ENCODE measurements at regions of chr10 and their contacts with region 1.

Region 1: DNA sequence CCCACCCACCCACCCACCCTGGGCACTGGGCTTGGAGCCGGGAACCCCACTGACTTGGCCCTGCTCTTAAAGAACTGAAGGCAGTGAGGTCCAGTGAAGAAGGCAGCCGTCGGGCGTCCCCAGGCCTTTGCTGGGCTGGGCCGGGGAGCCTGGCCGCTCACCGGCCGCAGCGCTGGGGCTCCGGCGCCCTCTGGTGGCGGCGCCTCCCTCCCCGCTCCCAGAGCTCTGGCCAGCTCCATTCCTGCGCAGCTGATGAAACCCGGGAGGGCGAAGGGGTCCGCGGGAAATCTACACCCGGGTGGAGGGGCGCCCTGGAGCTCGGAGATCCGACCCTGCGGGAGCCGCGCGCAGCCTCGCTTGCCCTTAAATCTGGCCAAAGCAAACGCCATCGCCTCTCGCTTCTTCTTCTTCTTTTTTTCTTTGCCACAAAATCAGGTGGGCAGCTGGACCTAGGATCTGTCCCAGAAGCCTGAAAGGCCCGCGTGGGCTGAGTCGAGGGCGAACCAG is 1.7 kb upstream of the CXCL12 start:
- DNase-seq: peak in 38 of 42 donors; percentile 33 to 81 (median 62)

Region 2: GRCh38 chr10:43671656-43672531 is 714.7 kb before region 1 on chr10:
- intact Hi-C with region 1: loop called (anchors 5 kb)
- DNase-seq: peak in 25 of 42 donors; percentile 19 to 80 (median 53)

Region 3: DNA sequence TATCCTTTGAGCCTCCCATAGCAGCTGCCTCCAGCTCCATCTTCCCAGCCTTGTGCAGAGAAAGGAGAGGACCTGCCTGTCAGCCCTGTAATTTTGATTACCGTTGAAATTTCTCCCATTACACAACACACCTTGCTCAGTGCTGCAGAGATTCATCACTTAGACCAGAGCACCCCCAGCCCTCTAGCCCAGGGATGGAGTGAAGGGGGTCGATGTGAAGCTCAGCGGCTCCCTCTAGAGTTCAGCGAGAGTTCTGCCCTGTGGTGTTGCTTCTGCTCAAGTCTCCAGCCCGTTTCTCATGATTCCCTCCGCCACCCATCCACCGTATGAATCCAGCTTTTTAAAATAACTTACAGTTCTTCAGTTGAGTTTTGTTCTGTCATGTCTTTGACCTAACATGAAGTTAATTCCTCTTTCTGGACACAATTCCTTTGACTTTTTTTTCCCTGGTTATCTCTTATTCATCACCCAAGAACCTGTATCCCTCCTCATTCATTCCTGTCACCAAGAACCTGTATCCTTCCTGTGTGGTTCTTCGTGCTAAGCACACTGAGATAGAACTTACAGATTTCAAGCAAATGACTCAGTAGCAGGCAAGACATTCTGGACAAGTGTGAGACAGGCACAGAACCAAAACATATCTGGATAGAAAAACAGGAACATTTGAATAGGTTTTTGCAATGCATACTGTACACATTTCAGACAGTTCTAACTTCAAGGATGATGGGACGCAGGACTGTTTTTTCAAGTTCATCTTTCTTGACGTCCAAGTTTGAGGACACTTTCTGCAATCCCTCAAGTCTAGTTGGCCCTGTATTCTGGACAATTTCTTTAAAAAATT is 702.9 kb before region 1 on chr10:
- intact Hi-C with region 1: loop called (anchors 5 kb)
- DNase-seq: no peak

Region 4: DNA sequence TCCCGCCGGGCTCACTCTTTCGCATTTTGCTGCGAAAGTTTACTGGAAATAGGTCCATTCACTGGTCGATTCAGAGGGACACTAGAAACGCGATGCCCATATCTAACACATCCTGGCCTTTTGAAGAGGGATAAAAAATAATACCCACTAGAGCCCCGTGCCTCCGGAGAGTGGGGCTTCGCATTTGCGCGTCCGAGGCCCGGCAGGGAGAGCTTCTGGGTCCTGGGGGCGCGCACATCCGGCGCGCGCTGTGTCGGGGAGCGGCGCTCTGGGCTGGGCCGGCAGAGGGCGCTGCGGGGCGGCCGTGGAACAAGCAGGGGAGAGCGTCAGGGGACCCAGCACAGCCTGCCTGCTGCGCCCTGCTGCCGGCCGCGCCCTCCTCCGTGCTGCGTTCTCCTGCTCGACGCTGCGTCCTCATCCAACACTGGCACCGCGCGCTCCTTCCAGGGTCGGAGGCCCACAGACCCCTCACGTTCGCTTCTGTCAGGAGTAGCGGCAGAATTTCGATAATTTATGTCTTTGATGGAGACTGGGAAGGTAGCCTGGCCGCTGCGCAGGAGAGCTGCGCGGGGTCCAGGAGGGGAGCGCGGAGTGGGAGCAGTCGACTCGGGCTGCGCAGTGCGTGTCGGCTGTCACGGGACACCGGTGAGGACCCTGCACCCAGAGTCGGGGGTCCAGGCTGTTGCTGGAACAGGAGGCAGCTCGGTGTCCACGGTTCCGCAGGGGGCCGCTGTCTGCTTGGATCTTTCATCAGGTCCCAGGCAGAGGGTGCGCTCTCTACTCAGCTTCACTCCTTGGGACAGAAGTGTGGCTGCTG is 696.4 kb before region 1 on chr10:
- intact Hi-C with region 1: loop called (anchors 5 kb)
- DNase-seq: peak; percentile 71 to 92 (median 84)

Region 5: DNA sequence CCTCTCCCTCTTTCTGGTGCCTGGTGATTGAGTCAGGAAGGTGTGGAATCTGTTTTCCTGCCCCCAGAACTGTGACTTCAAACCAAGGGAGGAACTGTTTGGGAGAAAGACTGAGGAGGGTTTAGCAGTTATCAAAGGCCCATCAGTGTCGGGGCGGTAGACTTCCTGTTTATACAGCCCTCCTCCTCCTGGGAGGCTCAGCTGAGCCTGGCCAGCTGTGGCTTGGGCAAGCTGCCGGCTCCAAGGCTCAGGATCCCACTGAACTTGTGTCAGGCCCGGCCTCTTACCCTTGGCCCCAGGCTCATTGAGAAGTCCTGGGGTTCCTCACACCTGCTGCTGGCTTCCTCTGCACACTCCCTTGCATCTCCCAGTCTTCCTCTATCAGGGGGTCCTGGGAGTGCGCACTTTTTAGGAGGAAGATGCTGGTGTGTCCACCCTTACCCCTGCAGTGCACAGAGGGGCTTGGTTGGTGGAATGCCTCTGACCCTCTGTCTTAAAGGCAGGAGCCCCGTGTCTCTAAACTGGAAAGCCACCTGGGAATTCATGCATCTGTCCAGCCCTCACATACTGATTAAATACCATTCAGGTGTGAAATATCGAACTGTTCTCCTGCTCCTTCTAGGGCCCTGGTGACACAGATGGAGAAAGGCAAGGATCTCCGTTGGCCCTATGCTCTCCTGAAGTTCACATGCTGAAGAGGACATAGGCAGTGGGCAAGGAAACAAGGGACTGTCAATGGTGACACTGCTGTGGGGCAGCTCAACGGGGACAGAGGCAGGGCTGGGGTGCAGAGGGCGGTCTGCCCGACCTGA is 34.1 kb before region 1 on chr10:
- intact Hi-C with region 1: no loop called
- DNase-seq: peak in 10 of 42 donors; percentile 12 to 36 (median 24)

Region 6: DNA sequence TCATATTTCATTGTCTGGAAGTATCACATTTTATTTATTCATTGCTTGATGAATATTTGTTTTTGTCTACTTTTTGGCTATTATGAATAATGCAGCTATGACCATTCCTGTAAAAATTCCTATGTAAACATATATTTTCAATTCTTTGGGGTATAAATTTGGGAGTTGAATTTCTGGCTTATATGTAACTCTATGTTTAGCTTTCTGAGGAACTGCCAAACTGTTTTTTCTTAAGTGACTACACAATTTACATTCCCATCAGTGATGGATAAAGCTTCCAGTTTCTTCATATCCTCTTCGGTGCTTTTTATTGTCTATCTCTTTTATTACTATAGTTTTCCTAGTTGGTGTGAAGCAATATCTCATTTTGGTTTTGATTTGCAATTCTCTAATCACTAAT is 113.9 kb after region 1 on chr10:
- intact Hi-C with region 1: no loop called
- DNase-seq: no peak

Region 7: GRCh38 chr10:44607116-44607515 is 220.5 kb after region 1 on chr10:
- intact Hi-C with region 1: no loop called
- DNase-seq: no peak

Measured in head of caudate nucleus (tissue), 42 donors.